ENCODE measurements at regions of chr7 and their contacts with region 1.

Region 1: DNA sequence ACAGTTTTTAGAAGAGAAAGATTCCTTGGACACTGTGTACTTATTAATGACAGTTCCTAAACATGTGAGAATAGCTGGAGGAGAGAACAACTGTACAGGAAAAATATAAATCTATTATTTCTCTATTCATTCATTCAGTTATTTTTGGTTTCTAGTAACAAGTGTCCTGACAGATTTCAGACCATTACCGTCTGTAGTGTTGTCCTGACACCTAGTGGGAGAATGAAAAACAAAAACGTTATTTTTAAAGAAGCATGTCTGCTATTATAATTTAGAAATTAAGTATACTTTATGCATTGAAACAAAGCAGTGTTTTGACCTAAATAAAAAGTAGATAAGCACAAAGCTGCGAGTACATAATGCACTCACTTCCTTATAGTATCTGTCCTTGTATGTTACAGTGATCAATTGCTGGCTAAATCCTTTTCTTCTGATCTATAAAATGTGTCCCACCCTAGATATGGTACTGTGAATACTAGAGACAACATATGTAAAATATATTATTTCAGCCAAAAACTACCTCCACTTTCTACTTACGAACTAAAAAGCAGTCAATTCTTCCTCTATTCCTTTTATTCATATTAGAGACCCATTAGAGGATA is 575.6 kb downstream of the ARL4A start:
- DNase-seq: no peak
- H3K4me3 ChIP-seq: no peak overlapping the region
- H3K27ac ChIP-seq: no peak overlapping the region
- H3K4me1 ChIP-seq: no peaks in the 10 kb centered on the region
- H3K27me3 ChIP-seq: peaks cover 2% of the 10 kb centered on the region
- CTCF ChIP-seq: peak; percentile 31 to 76 (median 64)
- POLR2A ChIP-seq: no peak

Region 2: DNA sequence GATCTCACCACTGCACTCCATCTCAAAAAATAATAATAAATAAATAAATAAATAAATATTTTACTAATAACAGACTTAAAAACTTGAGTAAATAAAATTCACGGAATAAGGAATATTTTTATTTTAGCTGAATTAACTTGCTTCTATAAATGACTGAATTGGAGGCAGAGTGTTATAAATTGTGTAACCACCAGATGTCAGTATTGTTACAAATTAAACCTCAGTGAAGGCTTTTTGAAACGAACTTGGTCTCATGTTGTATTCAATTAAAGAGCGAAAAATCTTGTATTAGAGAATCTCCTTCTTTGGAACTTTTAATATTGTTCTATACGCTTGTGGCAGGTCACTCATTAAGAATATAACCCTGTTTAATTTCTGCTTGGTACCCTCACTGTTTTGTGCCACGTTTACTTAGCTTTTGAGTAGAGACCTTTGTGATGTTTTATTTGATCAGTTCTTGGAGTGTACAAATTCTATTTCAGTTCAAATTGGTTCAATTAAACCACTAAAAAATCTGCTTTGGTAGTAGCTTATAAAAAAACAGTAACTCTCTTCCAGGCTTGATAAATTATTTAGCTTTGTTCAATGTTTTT is 738.1 kb before region 1 on chr7:
- intact Hi-C with region 1: loop called in 1 of 2 experiments (anchors 5 kb)
- DNase-seq: no peak
- H3K4me3 ChIP-seq: no peak overlapping the region
- H3K27ac ChIP-seq: no peak overlapping the region
- H3K4me1 ChIP-seq: no peaks in the 10 kb centered on the region
- H3K27me3 ChIP-seq: peaks cover 11% of the 10 kb centered on the region
- CTCF ChIP-seq: peak; percentile 49 to 76 (median 62)
- POLR2A ChIP-seq: no peak

Region 3: DNA sequence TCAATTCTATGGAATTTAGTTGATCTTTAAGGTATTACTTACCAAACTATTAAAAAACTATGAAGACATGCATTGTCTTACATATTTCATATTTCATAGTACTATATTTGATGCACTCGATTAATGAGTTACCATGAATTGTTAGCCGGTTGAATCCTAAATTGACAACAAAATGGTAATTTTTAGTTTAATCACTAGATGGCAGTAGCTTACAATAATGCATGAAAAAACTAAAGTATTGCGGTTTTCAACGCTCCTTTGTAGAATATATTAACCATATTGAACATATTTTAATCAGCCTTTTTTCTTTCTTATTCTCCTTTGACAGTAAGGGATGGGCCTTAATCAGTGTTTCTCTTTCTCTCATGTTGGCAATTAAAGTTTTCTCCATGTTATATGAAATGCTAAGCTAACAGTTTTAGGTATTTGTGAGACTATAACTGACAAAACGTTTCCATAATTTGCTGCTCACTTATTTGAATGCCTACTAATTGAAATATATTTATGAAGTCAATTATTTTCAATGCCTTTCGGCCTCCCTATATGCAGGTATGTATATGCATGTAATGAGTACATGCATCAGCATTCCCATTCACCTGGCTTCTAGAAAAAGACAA is 624.1 kb before region 1 on chr7:
- intact Hi-C with region 1: loop called (anchors 5 to 10 kb)
- DNase-seq: no peak
- H3K4me3 ChIP-seq: no peak overlapping the region
- H3K27ac ChIP-seq: no peak overlapping the region
- H3K4me1 ChIP-seq: no peaks in the 10 kb centered on the region
- H3K27me3 ChIP-seq: no peaks in the 10 kb centered on the region
- CTCF ChIP-seq: peak; percentile 48 to 79 (median 54)
- POLR2A ChIP-seq: no peak

Region 4: DNA sequence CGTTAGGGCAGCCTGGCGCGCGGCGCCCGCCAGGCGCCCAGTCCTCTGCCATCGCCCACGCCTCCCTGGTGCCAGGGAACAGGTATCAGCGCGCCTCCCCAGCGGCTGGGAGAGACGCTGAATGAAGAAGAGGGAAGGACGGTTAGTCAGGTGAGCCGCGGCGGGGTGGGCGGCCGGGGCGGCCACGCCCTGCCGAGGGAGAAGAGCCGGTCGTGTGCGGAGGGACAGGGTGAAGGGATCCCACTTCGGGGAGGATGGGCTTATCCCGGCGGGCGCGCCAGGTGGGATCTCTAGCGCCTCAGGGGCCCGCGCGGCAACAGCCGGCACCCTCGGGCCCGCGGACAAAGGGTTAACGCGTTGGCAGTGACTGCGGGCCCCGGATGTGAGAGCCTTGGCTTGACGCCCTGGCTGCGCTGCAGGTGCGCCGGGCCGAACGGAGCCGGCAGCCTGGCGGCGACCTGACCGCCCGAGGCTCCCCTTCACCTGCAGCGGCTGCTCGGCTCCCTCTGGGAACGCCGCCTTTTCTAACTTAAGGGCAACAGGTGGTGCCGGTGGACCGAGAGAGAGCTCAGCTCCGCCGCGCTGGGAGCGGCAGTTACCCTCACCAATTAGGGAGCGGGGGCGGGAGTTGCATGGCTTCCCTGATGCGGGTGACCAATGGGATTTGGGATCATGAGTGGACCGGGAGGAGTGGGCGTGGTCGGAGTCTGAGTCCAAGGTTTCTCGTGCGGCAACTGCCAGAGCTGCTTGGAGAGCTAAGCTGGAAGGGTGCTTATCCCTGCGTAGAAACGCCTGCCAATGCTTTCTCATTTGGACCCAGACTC is 575.9 kb before region 1 on chr7 and contains the start of gene ARL4A:
- intact Hi-C with region 1: loop called in 1 of 2 experiments (anchors 10 kb)
- DNase-seq: peak; percentile 99 to 100 (median 99)
- H3K4me3 ChIP-seq: peak within 1 kb of the TSS; percentile 0 to 89 (median 72)
- H3K27ac ChIP-seq: peak within 1 kb of the TSS; percentile 14 to 95 (median 85)
- H3K4me1 ChIP-seq: peaks cover 0 to 5% of the 10 kb centered on the region in 2 donors
- H3K27me3 ChIP-seq: no peaks in the 10 kb centered on the region
- CTCF ChIP-seq: peak in 2 of 6 experiments; percentile 3 to 7
- POLR2A ChIP-seq: peak; percentile 73 to 91
- total RNA-seq, gene ARL4A: 8.9 to 27.8 (median 10.4) TPM

Region 5: DNA sequence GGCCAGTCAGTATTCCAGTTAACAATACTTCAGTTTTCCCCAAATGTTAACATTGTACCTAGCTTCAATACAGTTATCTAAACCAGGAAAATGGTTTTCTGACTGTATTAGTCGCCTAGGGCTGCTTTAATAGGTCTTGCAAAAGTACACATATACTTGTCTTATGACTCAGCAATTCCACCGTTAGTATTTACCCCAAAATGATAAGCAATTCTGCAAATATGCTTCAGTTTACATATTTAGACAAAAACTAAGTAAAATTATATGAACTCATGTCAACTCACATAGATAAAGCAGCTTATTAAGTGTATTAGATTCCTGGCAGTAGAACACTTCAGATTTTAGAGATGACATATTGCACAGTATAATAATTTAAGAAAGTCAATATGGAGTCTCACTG is 212.3 kb before region 1 on chr7:
- intact Hi-C with region 1: no loop called
- DNase-seq: no peak
- H3K4me3 ChIP-seq: no peak overlapping the region
- H3K27ac ChIP-seq: no peak overlapping the region
- H3K4me1 ChIP-seq: no peaks in the 10 kb centered on the region
- H3K27me3 ChIP-seq: no peaks in the 10 kb centered on the region
- CTCF ChIP-seq: no peak
- POLR2A ChIP-seq: no peak

Region 6: DNA sequence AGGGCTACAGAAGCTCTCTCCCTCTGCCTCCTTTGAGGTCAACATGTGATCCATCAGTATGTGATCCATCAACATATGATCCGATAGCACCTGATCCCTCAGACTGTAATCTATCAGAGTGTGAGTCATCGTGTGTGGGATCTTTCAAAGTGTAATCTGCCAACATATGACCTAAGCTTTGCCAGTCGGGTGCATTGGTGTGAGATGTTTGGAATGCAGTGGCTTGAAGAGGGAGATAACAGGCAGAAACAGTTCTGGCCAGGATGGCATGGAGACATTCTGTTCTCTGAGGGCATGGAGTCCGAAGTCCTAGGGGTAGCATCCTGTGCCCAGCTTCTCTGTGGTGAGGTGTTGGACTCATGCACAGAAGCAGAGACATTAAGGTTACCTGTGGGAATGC is 944.1 kb after region 1 on chr7:
- intact Hi-C with region 1: no loop called
- DNase-seq: peak in 1 of 7 donors; percentile 4
- H3K4me3 ChIP-seq: no peak overlapping the region
- H3K27ac ChIP-seq: no peak overlapping the region
- H3K4me1 ChIP-seq: no peaks in the 10 kb centered on the region
- H3K27me3 ChIP-seq: no peaks in the 10 kb centered on the region
- CTCF ChIP-seq: no peak
- POLR2A ChIP-seq: no peak

Measured in adrenal gland (tissue), 19 donors.